ENCODE measurements at regions of chr4 and their contacts with region 1.

Region 1: GRCh38 chr4:55948726-55949474 is at the start of gene CEP135:
- DNase-seq: peak; percentile 94 to 95
- ATAC-seq: peak; percentile 80 to 93 (median 87)
- H3K4me3 ChIP-seq: peak within 1 kb of the TSS; percentile 87
- H3K4me3 Mint-ChIP-seq: peak within 1 kb of the TSS; percentile 95
- H3K27ac ChIP-seq: peak within 1 kb of the TSS; percentile 98
- H3K27ac Mint-ChIP-seq: peak within 1 kb of the TSS; percentile 95 to 98
- H3K4me1 ChIP-seq: peaks cover 19% of the 10 kb centered on the region
- H3K4me1 Mint-ChIP-seq: peaks cover 25 to 26% of the 10 kb centered on the region in 2 donors
- H3K27me3 ChIP-seq: no peaks in the 10 kb centered on the region
- H3K27me3 Mint-ChIP-seq: no peaks in the 10 kb centered on the region
- CTCF ChIP-seq: peak; percentile 97
- total RNA-seq, gene CEP135: 18.7 to 24.4 (median 19.9) TPM

Region 2: DNA sequence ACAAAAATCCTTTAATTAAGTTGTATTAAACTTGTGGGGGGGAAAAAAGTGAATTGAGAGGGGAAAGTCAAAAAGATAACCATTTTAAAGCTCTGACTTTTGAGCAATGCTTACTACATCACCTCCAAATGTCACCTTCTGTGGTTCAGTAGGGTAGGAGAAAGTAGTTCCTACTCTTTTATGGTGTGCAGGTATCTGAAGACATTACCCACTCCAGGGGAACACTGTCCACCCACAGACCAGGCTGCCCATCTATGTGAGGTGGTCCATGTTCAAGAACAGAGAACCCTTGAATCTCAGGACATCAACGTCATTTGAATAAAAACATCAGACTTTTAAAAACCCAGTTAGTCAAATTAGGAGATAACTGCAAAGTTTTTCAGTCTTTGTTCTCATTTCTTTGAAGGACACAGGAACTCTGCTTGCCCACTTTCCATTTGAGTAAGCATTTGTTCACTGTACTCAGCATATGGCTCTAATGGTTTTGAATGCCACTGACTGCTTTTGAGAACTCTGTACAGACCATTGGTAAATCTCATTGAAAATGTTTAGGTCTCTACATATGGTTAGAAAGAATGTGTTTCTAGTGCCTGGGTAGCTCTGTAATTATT is 331.2 kb before region 1 on chr4:
- intact Hi-C with region 1: no loop called
- DNase-seq: no peak
- ATAC-seq: no peak
- H3K4me3 ChIP-seq: no peak overlapping the region
- H3K4me3 Mint-ChIP-seq: no peak overlapping the region
- H3K27ac ChIP-seq: no peak overlapping the region
- H3K27ac Mint-ChIP-seq: no peak overlapping the region
- H3K4me1 ChIP-seq: no peaks in the 10 kb centered on the region
- H3K4me1 Mint-ChIP-seq: no peaks in the 10 kb centered on the region
- H3K27me3 ChIP-seq: no peaks in the 10 kb centered on the region
- H3K27me3 Mint-ChIP-seq: peaks cover 0 to 5% of the 10 kb centered on the region in 2 donors
- CTCF ChIP-seq: no peak

Region 3: DNA sequence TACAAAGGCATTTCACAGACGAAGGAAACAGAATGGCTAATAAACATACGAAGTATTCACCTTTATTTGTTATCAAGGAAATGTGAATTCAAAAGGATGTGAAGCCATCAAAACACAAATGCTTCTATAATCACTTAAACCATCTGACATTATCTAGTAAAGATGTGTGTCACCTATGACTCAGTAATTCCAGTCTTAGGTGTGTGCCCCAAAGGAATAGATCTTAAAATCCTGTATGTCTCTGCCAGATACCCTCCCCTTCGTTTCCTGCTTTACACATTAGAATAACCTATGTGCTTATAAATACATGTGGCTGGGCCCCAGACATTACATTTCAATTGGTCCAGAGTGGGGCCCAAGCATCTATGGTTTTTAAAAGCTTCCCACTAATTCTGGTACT is 41.9 kb before region 1 on chr4:
- intact Hi-C with region 1: no loop called
- DNase-seq: peak in 1 of 2 donors; percentile 8
- ATAC-seq: no peak
- H3K4me3 ChIP-seq: no peak overlapping the region
- H3K4me3 Mint-ChIP-seq: no peak overlapping the region
- H3K27ac ChIP-seq: no peak overlapping the region
- H3K27ac Mint-ChIP-seq: peak overlapping the region; percentile 41 to 51
- H3K4me1 ChIP-seq: no peaks in the 10 kb centered on the region
- H3K4me1 Mint-ChIP-seq: peaks cover 9 to 11% of the 10 kb centered on the region in 2 donors
- H3K27me3 ChIP-seq: no peaks in the 10 kb centered on the region
- H3K27me3 Mint-ChIP-seq: no peaks in the 10 kb centered on the region
- CTCF ChIP-seq: no peak

Region 4: GRCh38 chr4:56301181-56302076 is 352.5 kb after region 1 on chr4:
- intact Hi-C with region 1: loop called (anchors 2 kb)
- DNase-seq: peak; percentile 26 to 73
- ATAC-seq: peak; percentile 76 to 95 (median 77)
- H3K4me3 ChIP-seq: no peak overlapping the region
- H3K4me3 Mint-ChIP-seq: no peak overlapping the region
- H3K27ac ChIP-seq: no peak overlapping the region
- H3K27ac Mint-ChIP-seq: no peak overlapping the region
- H3K4me1 ChIP-seq: no peaks in the 10 kb centered on the region
- H3K4me1 Mint-ChIP-seq: peaks cover 6 to 7% of the 10 kb centered on the region in 2 donors
- H3K27me3 ChIP-seq: no peaks in the 10 kb centered on the region
- H3K27me3 Mint-ChIP-seq: peaks cover 2 to 7% of the 10 kb centered on the region in 2 donors
- CTCF ChIP-seq: peak; percentile 61

Region 5: DNA sequence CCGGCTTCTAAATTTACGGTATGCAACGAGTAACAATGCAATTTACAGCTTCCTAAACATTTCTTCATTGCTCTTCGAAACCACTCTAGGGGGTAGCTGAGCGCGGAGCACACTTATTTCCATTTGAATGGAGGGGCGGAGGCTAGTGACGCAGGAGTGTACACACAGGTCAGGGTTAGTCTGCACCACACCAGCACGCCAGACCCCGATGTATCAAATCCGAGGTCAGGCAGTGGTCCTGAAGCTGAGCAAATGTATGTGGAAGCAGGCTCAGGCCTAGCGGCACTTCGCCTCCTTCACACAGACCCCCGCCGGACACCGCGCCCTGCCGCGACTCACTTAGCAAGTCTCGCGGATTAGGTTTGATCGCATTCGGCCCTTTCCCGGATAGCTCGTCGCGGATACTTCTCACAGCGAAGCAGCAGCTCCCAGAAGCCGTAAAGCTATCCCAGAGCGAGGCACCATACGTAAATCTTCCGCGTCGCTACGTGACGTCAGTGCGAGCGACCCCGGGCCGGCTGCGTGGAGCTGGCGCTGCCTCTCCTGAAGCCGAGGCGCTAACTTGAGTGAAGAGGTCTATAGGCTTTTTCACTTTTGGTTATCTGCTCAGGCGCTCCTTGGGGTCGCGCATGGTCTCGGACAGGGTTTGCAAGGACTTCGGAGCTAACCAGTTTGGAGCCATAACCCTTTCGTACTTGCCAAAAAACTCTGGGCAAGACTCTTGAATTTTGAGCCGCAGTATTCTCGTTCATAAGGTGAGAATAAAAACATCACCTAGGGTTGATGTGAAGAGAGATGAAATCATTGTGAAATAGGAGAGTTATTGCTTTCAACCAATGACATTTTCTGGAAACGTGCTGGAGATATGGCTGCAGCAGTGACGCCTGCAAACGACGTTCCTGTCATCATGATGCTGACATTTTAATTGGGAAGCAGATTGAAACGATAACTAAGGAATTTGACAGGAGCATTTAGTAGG is 438.4 kb after region 1 on chr4 and contains the start of gene AASDH:
- intact Hi-C with region 1: loop called (anchors 1 kb)
- DNase-seq: peak; percentile 97 to 98
- ATAC-seq: peak; percentile 84 to 92 (median 86)
- H3K4me3 ChIP-seq: peak within 1 kb of the TSS; percentile 73
- H3K4me3 Mint-ChIP-seq: peak within 1 kb of the TSS; percentile 98
- H3K27ac ChIP-seq: peak within 1 kb of the TSS; percentile 94
- H3K27ac Mint-ChIP-seq: peak within 1 kb of the TSS; percentile 98 to 99
- H3K4me1 ChIP-seq: peaks cover 11% of the 10 kb centered on the region
- H3K4me1 Mint-ChIP-seq: peaks cover 24 to 31% of the 10 kb centered on the region in 2 donors
- H3K27me3 ChIP-seq: no peaks in the 10 kb centered on the region
- H3K27me3 Mint-ChIP-seq: no peaks in the 10 kb centered on the region
- CTCF ChIP-seq: no peak
- total RNA-seq, gene AASDH: 9.5 to 14.2 (median 9.6) TPM

Region 6: DNA sequence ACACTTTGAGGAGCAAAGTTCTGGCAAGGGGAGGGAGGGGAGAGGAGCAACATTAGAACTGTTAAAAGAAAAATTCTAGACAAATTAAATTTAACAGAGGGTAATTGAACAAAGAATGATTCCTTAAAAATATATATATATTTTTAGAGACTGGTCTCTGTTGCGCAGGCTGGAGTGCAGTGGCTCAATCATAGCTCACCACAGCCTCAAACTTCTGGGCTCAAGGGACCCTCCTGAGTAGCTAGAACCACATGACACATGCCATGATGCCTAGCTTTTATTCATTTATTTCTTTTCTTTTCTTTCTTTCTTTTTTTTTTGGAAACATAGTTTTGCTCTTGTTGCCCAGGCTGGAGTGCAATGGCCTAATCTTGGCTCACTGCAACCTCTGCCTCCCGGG is 891.7 kb after region 1 on chr4:
- intact Hi-C with region 1: loop called (anchors 2 kb)
- DNase-seq: no peak
- ATAC-seq: no peak
- H3K4me3 ChIP-seq: no peak overlapping the region
- H3K4me3 Mint-ChIP-seq: no peak overlapping the region
- H3K27ac ChIP-seq: no peak overlapping the region
- H3K27ac Mint-ChIP-seq: no peak overlapping the region
- H3K4me1 ChIP-seq: no peaks in the 10 kb centered on the region
- H3K4me1 Mint-ChIP-seq: peaks cover 6% of the 10 kb centered on the region in 2 donors
- H3K27me3 ChIP-seq: no peaks in the 10 kb centered on the region
- H3K27me3 Mint-ChIP-seq: no peaks in the 10 kb centered on the region
- CTCF ChIP-seq: no peak